SK-N-SH (cell line): ENCODE measurements at regions of chr7 and their contacts with region 1.

Region 1: DNA sequence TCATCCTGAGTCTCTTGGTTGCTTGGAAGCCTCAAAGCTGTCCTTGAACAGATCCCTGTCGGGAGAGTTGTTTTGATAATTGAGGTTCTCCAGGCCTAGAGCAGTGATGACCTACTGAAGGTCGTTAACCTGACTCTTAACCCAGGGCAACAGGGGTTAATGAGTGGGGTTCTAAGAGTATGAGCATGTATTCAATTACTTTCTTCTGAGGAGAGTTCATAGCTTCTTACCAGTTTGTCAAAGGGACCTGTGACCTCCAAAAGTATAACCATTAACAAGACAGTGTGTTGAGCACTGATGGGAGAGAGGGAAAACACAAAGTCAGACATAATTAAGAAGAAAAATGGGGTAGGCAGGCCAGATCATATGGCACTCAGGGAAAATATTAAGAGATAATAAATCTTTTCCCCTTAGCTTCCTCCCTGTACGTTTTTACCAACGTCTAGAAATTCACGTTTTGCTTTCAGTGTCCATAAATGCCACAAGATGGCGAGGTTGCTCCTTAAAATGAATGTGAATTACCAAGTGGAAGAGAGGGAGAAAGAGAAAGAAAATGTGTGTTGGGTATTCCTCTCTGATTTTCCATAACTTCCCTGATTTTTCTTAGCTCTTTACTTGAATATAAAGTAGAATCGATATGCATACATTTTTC is 97.6 kb downstream of the SUGCT start:
- DNase-seq: peak; percentile 57
- H3K4me3 ChIP-seq: no peak overlapping the region
- H3K27ac ChIP-seq: peak overlapping the region; percentile 59 to 85
- H3K4me1 ChIP-seq: peaks cover 0 to 4% of the 10 kb centered on the region in 2 experiments; a peak in 1 of 4 replicates
- H3K27me3 ChIP-seq: no peaks in the 10 kb centered on the region
- CTCF ChIP-seq: peak; percentile 97
- EP300 ChIP-seq: no peak; a peak in 1 of 4 replicates
- RAD21 ChIP-seq: peak; percentile 97

Region 2: DNA sequence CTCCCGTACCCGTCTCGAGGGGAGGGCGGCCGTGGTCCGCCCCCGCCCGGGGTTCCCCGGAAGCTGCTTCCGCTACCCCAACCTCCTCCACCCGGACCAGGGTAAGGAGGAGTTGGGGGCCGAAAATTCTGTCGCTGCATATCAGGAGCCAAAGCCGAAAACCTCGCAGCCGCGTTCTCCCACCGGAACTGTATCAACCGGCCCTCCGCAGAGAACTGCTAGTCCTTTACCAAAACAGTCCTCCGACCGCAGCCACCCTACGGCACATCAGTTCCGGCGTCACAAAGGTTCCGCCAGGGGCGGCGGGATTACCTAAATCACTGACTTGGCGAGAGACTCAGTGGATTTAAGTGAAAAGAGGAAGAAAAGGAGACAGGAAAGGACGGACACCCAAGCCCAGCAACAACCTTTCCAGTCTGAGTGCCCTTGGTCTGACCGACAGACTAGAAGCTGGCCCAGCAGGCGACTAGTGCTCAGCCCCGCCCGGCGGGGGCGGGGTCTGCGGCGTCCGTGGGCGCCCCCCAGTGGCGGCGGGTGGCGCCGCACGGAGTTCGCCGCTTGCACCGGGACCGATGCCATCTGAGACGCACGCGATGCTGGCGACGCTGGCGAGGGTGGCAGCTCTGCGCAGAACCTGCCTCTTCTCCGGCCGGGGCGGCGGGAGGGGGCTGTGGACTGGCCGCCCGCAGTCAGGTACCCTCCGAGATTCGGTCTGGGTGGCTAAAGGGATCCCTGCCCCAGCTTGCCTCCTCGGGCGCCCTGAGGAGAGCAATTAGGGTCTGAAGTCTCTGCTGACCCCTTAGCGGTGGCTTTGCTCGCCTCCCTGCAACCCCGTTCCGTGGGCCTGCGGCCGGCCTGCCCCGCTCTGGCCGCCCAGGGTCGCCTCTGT is 97.7 kb before region 1 on chr7 and contains the starts of genes MPLKIP and SUGCT:
- CTCF ChIA-PET with region 1: interaction called, 13 read pairs
- POLR2A ChIA-PET with region 1: no interaction called
- DNase-seq: peak; percentile 99
- H3K4me3 ChIP-seq: peak within 1 kb of the TSS; percentile 81 to 98
- H3K27ac ChIP-seq: peak within 1 kb of the TSS; percentile 91 to 95
- H3K4me1 ChIP-seq: peaks cover 8 to 9% of the 10 kb centered on the region in 2 experiments; a peak in 2 of 4 replicates
- H3K27me3 ChIP-seq: no peaks in the 10 kb centered on the region
- CTCF ChIP-seq: peak; percentile 99
- EP300 ChIP-seq: peak; percentile 20 to 21; a peak in 2 of 4 replicates
- RAD21 ChIP-seq: peak; percentile 49
- polyA plus RNA-seq, gene MPLKIP: 48.4 and 64.0 TPM in 2 replicates
- polyA plus RNA-seq, gene SUGCT: 41.4 and 53.7 TPM in 2 replicates

Region 3: GRCh38 chr7:40211276-40212003 is 20.9 kb before region 1 on chr7:
- CTCF ChIA-PET with region 1: interaction called, 19 read pairs
- POLR2A ChIA-PET with region 1: no interaction called
- DNase-seq: no peak
- H3K4me3 ChIP-seq: no peak overlapping the region
- H3K27ac ChIP-seq: peak overlapping the region in 1 of 2 experiments; percentile 52; a peak in 3 of 4 replicates
- H3K4me1 ChIP-seq: no peaks in the 10 kb centered on the region
- H3K27me3 ChIP-seq: no peaks in the 10 kb centered on the region
- CTCF ChIP-seq: no peak
- EP300 ChIP-seq: peak in 1 of 2 experiments; percentile 42; a peak in 1 of 4 replicates
- RAD21 ChIP-seq: no peak

Region 4: GRCh38 chr7:40303996-40304395 is 71.6 kb after region 1 on chr7:
- CTCF ChIA-PET with region 1: no interaction called
- POLR2A ChIA-PET with region 1: no interaction called
- DNase-seq: no peak
- H3K4me3 ChIP-seq: no peak overlapping the region
- H3K27ac ChIP-seq: peak overlapping the region in 1 of 2 experiments; percentile 99; a peak in 2 of 4 replicates
- H3K4me1 ChIP-seq: peaks cover 0 to 41% of the 10 kb centered on the region in 2 experiments; a peak in 3 of 4 replicates
- H3K27me3 ChIP-seq: no peaks in the 10 kb centered on the region
- CTCF ChIP-seq: no peak
- EP300 ChIP-seq: no peak
- RAD21 ChIP-seq: no peak

Region 5: GRCh38 chr7:40329601-40330153 is 97.3 kb after region 1 on chr7:
- CTCF ChIA-PET with region 1: interaction called, 66 read pairs
- POLR2A ChIA-PET with region 1: no interaction called
- DNase-seq: peak; percentile 73
- H3K4me3 ChIP-seq: no peak overlapping the region
- H3K27ac ChIP-seq: peak overlapping the region; percentile 83 to 96
- H3K4me1 ChIP-seq: peaks cover 12 to 17% of the 10 kb centered on the region in 2 experiments; a peak in 3 of 4 replicates
- H3K27me3 ChIP-seq: no peaks in the 10 kb centered on the region
- CTCF ChIP-seq: peak; percentile 95
- EP300 ChIP-seq: peak; percentile 52 to 53; a peak in 2 of 4 replicates
- RAD21 ChIP-seq: peak; percentile 99

Region 6: GRCh38 chr7:40341836-40342235 is 109.5 kb after region 1 on chr7:
- CTCF ChIA-PET with region 1: no interaction called
- POLR2A ChIA-PET with region 1: no interaction called
- DNase-seq: no peak
- H3K4me3 ChIP-seq: no peak overlapping the region
- H3K27ac ChIP-seq: no peak overlapping the region
- H3K4me1 ChIP-seq: no peaks in the 10 kb centered on the region; a peak in 1 of 4 replicates
- H3K27me3 ChIP-seq: no peaks in the 10 kb centered on the region
- CTCF ChIP-seq: no peak
- EP300 ChIP-seq: no peak
- RAD21 ChIP-seq: no peak

Region 7: GRCh38 chr7:40382145-40382544 is 149.8 kb after region 1 on chr7:
- CTCF ChIA-PET with region 1: no interaction called
- POLR2A ChIA-PET with region 1: no interaction called
- DNase-seq: no peak
- H3K4me3 ChIP-seq: no peak overlapping the region
- H3K27ac ChIP-seq: no peak overlapping the region
- H3K4me1 ChIP-seq: no peaks in the 10 kb centered on the region
- H3K27me3 ChIP-seq: no peaks in the 10 kb centered on the region
- CTCF ChIP-seq: no peak
- EP300 ChIP-seq: no peak
- RAD21 ChIP-seq: no peak

Region 8: GRCh38 chr7:40437498-40437897 is 205.1 kb after region 1 on chr7:
- CTCF ChIA-PET with region 1: no interaction called
- POLR2A ChIA-PET with region 1: no interaction called
- DNase-seq: no peak
- H3K4me3 ChIP-seq: no peak overlapping the region
- H3K27ac ChIP-seq: peak overlapping the region; percentile 90 to 94
- H3K4me1 ChIP-seq: peaks cover 0 to 18% of the 10 kb centered on the region in 2 experiments
- H3K27me3 ChIP-seq: no peaks in the 10 kb centered on the region
- CTCF ChIP-seq: no peak
- EP300 ChIP-seq: peak; percentile 71 to 99
- RAD21 ChIP-seq: no peak

Region 9: GRCh38 chr7:41696314-41696916 is 1464.0 kb after region 1 on chr7:
- CTCF ChIA-PET with region 1: interaction called, 42 read pairs
- POLR2A ChIA-PET with region 1: no interaction called
- DNase-seq: peak; percentile 79
- H3K4me3 ChIP-seq: peak overlapping the region; percentile 58 to 90
- H3K27ac ChIP-seq: peak overlapping the region; percentile 54 to 92; a peak in 3 of 4 replicates
- H3K4me1 ChIP-seq: peaks cover 14 to 28% of the 10 kb centered on the region in 2 experiments; a peak in 3 of 4 replicates
- H3K27me3 ChIP-seq: no peaks in the 10 kb centered on the region
- CTCF ChIP-seq: peak; percentile 97
- EP300 ChIP-seq: peak in 1 of 2 experiments; percentile 10; a peak in 1 of 4 replicates
- RAD21 ChIP-seq: peak; percentile 86

Region 10: DNA sequence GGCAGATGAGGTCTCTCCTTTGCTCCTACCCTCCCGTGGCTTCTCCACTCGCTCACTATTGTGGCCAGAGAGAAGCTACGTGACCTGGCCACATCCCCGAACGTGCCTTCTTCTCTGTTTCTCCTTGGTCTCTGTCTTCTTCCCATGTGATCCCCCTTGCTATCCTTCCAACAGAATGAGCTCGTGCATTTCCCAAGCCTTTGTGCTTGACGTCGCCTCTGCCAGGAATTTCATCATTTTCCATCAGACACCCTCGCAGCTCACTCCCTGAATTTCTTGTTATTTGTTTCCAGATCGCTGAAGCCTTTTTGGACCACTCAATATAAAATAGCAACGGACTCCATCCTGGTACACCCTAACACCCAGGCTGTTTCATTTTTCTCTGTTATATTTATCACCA is 1484.3 kb after region 1 on chr7:
- CTCF ChIA-PET with region 1: interaction called, 27 read pairs
- POLR2A ChIA-PET with region 1: no interaction called
- DNase-seq: no peak
- H3K4me3 ChIP-seq: no peak overlapping the region
- H3K27ac ChIP-seq: no peak overlapping the region
- H3K4me1 ChIP-seq: no peaks in the 10 kb centered on the region; a peak in 1 of 4 replicates
- H3K27me3 ChIP-seq: no peaks in the 10 kb centered on the region
- CTCF ChIP-seq: no peak
- EP300 ChIP-seq: no peak
- RAD21 ChIP-seq: no peak